IMR-90 (cell line): ENCODE measurements at regions of chr9 and their contacts with region 1.

Region 1: DNA sequence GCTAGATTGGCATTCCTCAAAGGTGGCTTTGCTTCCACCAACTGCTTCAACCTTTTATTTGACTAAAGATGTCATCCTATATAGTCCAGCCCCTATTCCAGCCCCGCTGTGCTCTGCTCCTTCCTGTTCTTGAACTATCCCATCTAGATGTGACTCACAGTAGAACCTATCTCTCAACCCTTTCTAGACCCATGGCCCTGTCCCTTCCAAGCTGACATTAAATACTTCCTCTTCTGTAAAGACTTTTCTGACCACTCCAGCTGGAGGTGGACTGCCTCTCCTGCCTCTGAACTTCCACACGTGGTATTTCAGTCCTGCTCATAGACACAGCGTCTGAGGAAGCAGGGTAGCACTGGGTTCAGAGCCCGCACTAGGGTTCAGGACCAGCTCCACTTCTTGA is 32.4 kb downstream of the OSTF1 start:
- DNase-seq: no peak
- ATAC-seq: no peak
- H3K4me3 ChIP-seq: no peak overlapping the region
- H3K27ac ChIP-seq: no peak overlapping the region
- H3K4me1 ChIP-seq: 0 out of 2 replicates have a peak, but pooled peaks cover 2% of the 10 kb centered on the region
- H3K27me3 ChIP-seq: no peaks in the 10 kb centered on the region
- CTCF ChIP-seq: no peak
- POLR2A ChIP-seq: no peak
- RAD21 ChIP-seq: no peak

Region 2: GRCh38 chr9:75101096-75101495 is 19.6 kb before region 1 on chr9:
- CTCF ChIA-PET with region 1: interaction called, 13 read pairs
- POLR2A ChIA-PET with region 1: no interaction called
- dilution Hi-C with region 1: no loop called
- in situ Hi-C with region 1: no loop called
- intact Hi-C with region 1: no loop called
- DNase-seq: no peak
- ATAC-seq: no peak
- H3K4me3 ChIP-seq: no peak overlapping the region
- H3K27ac ChIP-seq: no peak overlapping the region
- H3K4me1 ChIP-seq: peaks cover 10% of the 10 kb centered on the region
- H3K27me3 ChIP-seq: no peaks in the 10 kb centered on the region
- CTCF ChIP-seq: no peak
- POLR2A ChIP-seq: no peak
- RAD21 ChIP-seq: no peak

Region 3: GRCh38 chr9:75200892-75201470 is 80.3 kb after region 1 on chr9:
- CTCF ChIA-PET with region 1: no interaction called
- POLR2A ChIA-PET with region 1: no interaction called
- dilution Hi-C with region 1: no loop called
- in situ Hi-C with region 1: no loop called
- intact Hi-C with region 1: no loop called
- DNase-seq: peak; percentile 49
- ATAC-seq: 0 out of 2 replicates have a peak, but pooled peaks have one; percentile 21
- H3K4me3 ChIP-seq: no peak overlapping the region
- H3K27ac ChIP-seq: no peak overlapping the region
- H3K4me1 ChIP-seq: no peaks in the 10 kb centered on the region
- H3K27me3 ChIP-seq: no peaks in the 10 kb centered on the region; the same call in 1 of the 2 replicates
- CTCF ChIP-seq: peak; percentile 65
- POLR2A ChIP-seq: no peak
- RAD21 ChIP-seq: peak; percentile 45